ENCODE measurements at regions of chr2 and their contacts with region 1.

Region 1: GRCh38 chr2:173448938-173449471 is 94.3 kb downstream of the CDCA7 start:
- DNase-seq: peak; percentile 94
- ATAC-seq: peak; percentile 97
- H3K4me3 Mint-ChIP-seq: peak overlapping the region; percentile 61
- H3K27ac Mint-ChIP-seq: peak overlapping the region; percentile 82
- H3K4me1 Mint-ChIP-seq: peaks cover 21% of the 10 kb centered on the region
- H3K27me3 Mint-ChIP-seq: peaks cover 3% of the 10 kb centered on the region; the same call in 1 of the 2 replicates
- CTCF ChIP-seq: peak; percentile 68; the same call in 1 of the 2 replicates

Region 2: DNA sequence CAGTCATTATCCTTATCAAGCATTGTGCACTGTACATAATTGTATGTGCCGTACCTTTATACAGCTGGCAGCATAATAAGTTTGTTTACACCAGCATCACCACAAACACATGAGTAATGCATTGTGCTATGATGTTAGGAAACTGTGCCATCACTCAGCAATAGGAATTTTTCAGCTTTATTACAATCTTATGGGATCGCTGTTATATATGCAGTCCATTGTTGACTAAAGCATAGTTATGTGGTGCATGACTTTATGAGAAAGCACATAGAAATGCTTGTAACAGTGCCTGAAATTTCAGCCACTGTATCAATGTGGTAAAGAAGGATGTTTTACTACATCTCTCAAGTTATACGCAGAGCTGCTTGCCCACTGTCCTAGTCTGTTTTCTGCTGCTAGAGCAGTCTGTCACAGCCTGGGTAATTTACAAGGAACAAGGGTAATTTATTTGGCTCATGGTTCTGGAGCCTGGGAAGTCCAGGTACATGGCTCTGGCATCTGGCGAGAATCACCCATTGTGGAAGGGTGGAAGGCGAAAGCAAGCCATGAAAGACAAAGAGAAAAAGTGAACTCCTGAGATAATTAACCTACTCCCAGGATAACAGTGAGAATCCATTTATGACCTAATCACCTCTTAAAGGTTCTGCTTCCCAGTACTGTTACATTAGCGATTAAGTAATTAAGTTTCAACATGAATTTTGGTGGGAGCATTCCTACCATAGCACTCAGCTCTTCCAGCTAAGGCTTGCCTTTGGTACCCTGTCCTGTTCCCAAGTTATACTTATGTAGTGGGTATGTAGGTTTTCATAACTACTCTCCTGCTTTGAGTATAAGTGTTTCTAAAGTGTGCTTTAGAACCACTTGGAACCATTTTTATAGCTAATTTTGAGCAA is 368.8 kb before region 1 on chr2:
- CTCF ChIA-PET with region 1: no interaction called
- POLR2A ChIA-PET with region 1: no interaction called
- DNase-seq: no peak
- ATAC-seq: no peak
- H3K4me3 Mint-ChIP-seq: no peak overlapping the region
- H3K27ac Mint-ChIP-seq: no peak overlapping the region
- H3K4me1 Mint-ChIP-seq: peaks cover 11% of the 10 kb centered on the region
- H3K27me3 Mint-ChIP-seq: peaks cover under 1% of the 10 kb centered on the region
- CTCF ChIP-seq: no peak

Region 3: DNA sequence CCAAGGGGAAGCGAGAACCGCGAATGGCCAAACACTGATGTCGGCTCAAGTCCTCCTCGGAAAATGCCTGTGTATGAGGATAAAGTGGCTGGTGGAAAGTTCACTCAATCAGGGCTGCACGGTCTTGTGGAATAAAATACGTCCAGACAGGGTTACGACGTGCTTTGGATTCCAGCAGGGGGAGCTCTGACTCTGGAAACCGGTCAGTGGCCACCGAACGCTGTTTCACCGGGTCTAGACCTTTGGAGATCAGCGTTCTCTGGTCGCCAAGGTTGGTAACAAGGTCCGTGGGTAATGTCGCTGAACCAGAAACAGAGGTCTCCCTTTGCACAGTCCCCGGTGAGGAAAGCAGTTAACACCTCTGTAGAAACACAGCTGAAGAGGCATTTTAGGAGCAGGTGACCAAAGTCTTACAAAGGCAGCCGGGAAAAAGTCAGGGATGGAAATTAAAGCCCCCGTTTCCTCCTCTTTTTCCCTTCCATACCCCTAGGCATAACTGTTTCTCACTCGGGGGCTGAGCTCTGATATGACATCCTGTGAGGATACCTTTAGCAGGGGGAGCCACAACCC is 46.5 kb before region 1 on chr2:
- CTCF ChIA-PET with region 1: interaction called, 57 read pairs
- POLR2A ChIA-PET with region 1: interaction called, 3 read pairs
- DNase-seq: peak; percentile 84
- ATAC-seq: peak; percentile 92
- H3K4me3 Mint-ChIP-seq: peak overlapping the region; percentile 72
- H3K27ac Mint-ChIP-seq: no peak overlapping the region
- H3K4me1 Mint-ChIP-seq: peaks cover 33% of the 10 kb centered on the region
- H3K27me3 Mint-ChIP-seq: peaks cover 3% of the 10 kb centered on the region
- CTCF ChIP-seq: peak; percentile 76

Region 4: DNA sequence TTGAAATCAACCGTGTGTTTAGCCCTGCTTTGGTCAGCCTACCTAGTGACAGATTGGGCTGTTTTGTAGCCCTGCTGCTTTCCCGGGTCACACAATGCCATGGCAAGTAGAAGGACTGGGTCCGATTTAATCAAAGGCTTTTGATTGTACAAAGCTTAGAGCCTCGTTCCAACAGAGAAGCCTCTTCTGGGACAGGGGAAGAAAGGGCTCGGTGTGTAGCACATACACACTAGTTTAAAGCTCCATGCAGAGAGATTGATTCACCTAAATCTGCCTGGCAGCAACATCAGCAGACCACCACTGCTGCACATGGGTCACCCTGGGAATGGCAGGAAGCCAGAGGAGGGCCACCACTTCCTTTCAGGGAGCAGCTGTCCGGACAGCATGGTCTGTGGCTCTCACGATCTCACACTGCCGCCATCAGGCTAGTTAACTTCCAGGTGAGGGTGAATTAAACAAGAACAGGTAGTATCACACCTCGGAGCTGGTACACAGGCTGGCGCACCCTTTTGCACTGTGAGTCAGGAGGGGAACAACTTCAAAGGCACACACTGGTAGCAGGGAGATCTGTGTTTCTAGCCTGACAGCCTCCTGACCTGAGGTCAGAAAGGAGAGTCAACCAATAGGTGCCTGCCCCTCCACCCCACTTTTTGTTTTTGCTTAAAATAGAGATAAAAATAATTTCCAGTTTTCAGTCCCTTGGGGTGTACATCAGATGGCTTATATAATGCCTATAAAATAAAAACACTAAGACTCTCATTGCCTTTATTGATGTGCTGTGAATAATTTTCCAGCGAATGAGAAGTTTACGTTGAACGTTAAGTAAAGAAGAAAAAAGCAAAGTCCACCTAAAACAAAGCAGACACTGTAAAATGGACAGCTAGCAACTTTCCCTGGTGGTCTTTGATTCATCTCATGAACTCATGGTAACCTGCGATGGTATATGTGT is 14.2 kb after region 1 on chr2:
- CTCF ChIA-PET with region 1: interaction called, 14 read pairs
- POLR2A ChIA-PET with region 1: no interaction called
- DNase-seq: no peak
- ATAC-seq: peak; percentile 69
- H3K4me3 Mint-ChIP-seq: no peak overlapping the region
- H3K27ac Mint-ChIP-seq: no peak overlapping the region
- H3K4me1 Mint-ChIP-seq: peaks cover 6% of the 10 kb centered on the region; the same call in 1 of the 2 replicates
- H3K27me3 Mint-ChIP-seq: no peaks in the 10 kb centered on the region
- CTCF ChIP-seq: no peak

Region 5: GRCh38 chr2:173568054-173568453 is 119.0 kb after region 1 on chr2:
- CTCF ChIA-PET with region 1: interaction called, 20 read pairs
- POLR2A ChIA-PET with region 1: no interaction called
- DNase-seq: peak; percentile 70
- ATAC-seq: peak; percentile 83
- H3K4me3 Mint-ChIP-seq: no peak overlapping the region
- H3K27ac Mint-ChIP-seq: no peak overlapping the region
- H3K4me1 Mint-ChIP-seq: peaks cover 30% of the 10 kb centered on the region
- H3K27me3 Mint-ChIP-seq: no peaks in the 10 kb centered on the region
- CTCF ChIP-seq: no peak

Measured in WTC11 (cell line).